ENCODE measurements at regions of chr22 and their contacts with region 1.

Region 1: DNA sequence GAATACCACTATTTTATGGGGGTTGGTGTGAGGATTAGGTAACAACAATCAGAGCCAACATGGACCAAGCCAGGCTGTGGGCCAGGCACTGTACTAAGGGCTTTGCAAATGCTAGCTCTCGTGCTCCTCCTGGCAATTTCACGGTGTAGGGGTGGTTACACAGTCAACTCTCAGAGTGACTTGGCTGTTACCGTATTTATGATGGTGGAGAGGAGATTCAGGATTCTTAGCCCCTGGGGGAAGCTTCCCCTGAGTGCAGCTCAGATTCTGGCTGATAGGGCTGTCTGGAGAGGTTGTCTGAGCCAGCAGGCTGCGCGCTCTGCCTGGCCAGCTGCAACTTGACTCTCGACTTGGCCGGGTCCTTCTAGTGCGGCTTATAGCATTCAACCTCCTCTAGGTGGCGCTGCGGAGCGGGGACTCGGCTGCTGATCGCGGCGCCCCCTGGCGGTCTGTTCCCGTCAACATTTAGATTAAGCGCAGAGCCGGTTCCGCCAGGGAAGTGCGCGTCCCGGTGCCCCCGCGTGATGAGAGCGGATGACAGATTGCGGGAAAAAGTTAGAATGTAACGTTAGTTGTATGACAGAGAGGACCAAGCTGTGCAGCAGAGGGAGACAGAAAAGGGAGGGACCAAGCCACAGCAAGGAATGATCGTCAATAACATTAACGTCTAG is 4.5 kb upstream of the NCF4 start:
- DNase-seq: peak; percentile 92
- ATAC-seq: peak; percentile 44
- H3K4me3 ChIP-seq: no peak overlapping the region
- H3K4me3 Mint-ChIP-seq: peak overlapping the region; percentile 66
- H3K27ac ChIP-seq: no peak overlapping the region
- H3K27ac Mint-ChIP-seq: peak overlapping the region; percentile 78
- H3K4me1 ChIP-seq: peaks cover 28 to 41% of the 10 kb centered on the region in 2 donors
- H3K4me1 Mint-ChIP-seq: peaks cover 39% of the 10 kb centered on the region
- H3K27me3 ChIP-seq: no peaks in the 10 kb centered on the region
- H3K27me3 Mint-ChIP-seq: no peaks in the 10 kb centered on the region
- CTCF ChIP-seq: peak; percentile 100

Region 2: DNA sequence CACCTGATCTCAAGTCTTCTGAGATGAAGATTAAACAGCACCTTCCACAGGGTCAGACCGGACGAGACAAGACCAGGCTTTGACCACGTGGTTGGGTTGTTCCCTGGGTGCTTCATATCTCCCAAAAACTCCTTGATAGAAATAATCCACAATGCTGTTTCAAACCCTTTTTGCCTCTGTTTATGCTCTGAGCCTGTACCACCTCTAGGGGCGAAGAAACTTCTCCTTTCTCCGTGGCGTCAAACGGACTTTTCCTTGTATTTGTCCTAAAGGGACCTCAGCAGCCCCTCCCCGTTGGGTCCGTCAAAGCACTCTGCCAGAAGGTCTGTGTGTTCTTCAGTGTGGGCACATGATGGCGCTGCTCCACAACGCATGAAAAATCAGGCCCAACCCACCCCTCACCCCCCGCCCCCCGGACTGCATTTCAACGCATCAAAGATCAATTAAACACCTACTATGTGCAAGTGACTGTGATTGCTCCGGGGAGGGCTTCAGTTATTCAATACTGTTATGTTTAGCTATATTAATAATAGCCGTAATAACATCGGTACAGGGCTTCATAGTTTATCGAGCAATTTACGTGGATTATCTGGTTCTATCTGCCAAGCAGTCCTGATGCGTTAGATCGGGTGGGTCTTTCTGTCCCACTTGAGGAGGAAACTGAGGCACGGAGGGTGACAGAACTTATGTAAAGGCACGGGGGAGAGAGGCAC is 310.0 kb before region 1 on chr22:
- CTCF ChIA-PET with region 1: interaction called, 12 read pairs
- POLR2A ChIA-PET with region 1: no interaction called
- intact Hi-C with region 1: loop called (anchors 1 kb)
- DNase-seq: peak; percentile 67
- ATAC-seq: peak; percentile 79
- H3K4me3 ChIP-seq: no peak overlapping the region
- H3K4me3 Mint-ChIP-seq: no peak overlapping the region
- H3K27ac ChIP-seq: no peak overlapping the region
- H3K27ac Mint-ChIP-seq: no peak overlapping the region
- H3K4me1 ChIP-seq: peaks cover 15 to 32% of the 10 kb centered on the region in 2 donors
- H3K4me1 Mint-ChIP-seq: peaks cover 19% of the 10 kb centered on the region
- H3K27me3 ChIP-seq: no peaks in the 10 kb centered on the region
- H3K27me3 Mint-ChIP-seq: no peaks in the 10 kb centered on the region
- CTCF ChIP-seq: peak; percentile 67

Region 3: GRCh38 chr22:36569999-36570398 is 286.3 kb before region 1 on chr22:
- CTCF ChIA-PET with region 1: no interaction called
- POLR2A ChIA-PET with region 1: no interaction called
- intact Hi-C with region 1: no loop called
- DNase-seq: no peak
- ATAC-seq: no peak
- H3K4me3 ChIP-seq: no peak overlapping the region
- H3K4me3 Mint-ChIP-seq: no peak overlapping the region
- H3K27ac ChIP-seq: no peak overlapping the region
- H3K27ac Mint-ChIP-seq: no peak overlapping the region
- H3K4me1 ChIP-seq: no peaks in the 10 kb centered on the region
- H3K4me1 Mint-ChIP-seq: no peaks in the 10 kb centered on the region
- H3K27me3 ChIP-seq: no peaks in the 10 kb centered on the region
- H3K27me3 Mint-ChIP-seq: peaks cover 18% of the 10 kb centered on the region
- CTCF ChIP-seq: no peak

Region 4: DNA sequence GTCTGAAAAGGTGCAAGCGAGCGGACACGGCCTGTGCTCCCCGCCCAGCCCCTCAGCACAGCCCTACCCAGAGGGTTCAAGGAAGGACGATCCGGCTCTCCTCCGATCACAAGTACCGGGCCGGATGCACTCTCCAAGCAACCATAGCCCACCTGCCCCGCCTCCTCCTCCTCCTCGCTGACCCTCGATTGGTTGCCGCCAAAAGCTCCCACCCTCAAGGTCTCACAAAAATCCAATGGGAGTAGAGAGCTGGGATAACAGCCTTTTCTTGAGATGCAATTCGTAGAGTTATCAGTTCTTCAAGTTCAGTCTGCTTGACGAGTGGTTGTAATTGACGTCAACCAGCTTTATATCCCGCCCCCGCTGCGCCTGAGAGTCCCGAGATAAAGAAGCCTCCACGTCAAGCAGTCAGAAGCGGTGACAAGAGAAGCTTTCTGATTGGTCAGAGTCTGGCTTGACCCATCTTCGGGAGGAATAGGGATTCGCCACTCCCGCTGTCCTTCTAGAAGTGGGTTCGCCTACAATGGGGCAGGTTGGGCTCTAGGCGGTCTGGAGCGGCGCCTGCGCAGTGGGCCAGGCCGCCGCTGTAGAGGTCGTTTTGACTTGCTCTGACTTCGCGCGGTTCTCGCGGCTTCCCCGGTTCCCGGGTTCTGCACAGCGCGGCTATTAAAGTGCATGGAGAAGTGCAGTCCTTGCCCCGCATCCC is 80.1 kb before region 1 on chr22 and contains the start of gene IFT27:
- CTCF ChIA-PET with region 1: interaction called, 115 read pairs
- POLR2A ChIA-PET with region 1: interaction called, 13 read pairs
- intact Hi-C with region 1: loop called (anchors 2 kb)
- DNase-seq: peak; percentile 99
- ATAC-seq: peak; percentile 87
- H3K4me3 ChIP-seq: peak within 1 kb of the TSS; percentile 60 to 82 (median 73)
- H3K4me3 Mint-ChIP-seq: peak within 1 kb of the TSS; percentile 96
- H3K27ac ChIP-seq: peak within 1 kb of the TSS; percentile 80 to 91
- H3K27ac Mint-ChIP-seq: peak within 1 kb of the TSS; percentile 95
- H3K4me1 ChIP-seq: peaks cover 13 to 17% of the 10 kb centered on the region in 2 donors
- H3K4me1 Mint-ChIP-seq: peaks cover 16% of the 10 kb centered on the region
- H3K27me3 ChIP-seq: no peaks in the 10 kb centered on the region
- H3K27me3 Mint-ChIP-seq: no peaks in the 10 kb centered on the region
- CTCF ChIP-seq: no peak
- total RNA-seq, gene IFT27: 40.3 and 42.8 TPM in 2 replicates

Region 5: DNA sequence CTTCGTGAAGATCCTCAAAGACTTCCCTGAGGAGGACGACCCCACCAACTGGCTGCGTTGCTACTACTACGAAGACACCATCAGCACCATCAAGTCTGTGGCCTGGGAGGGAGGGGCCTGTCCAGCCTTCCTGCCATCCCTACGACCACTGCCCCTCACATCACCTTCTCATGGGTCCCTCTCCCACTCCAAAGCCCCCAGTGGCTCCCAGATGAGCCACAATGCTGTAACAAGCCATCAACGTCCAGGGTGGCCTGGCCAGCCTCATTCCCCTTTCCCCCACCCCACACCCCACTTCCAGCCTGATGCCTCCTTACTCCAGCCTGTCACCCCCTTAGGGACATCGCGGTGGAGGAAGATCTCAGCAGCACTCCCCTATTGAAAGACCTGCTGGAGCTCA is 19.4 kb after region 1 on chr22:
- CTCF ChIA-PET with region 1: no interaction called
- POLR2A ChIA-PET with region 1: no interaction called
- intact Hi-C with region 1: no loop called
- DNase-seq: no peak
- ATAC-seq: no peak
- H3K4me3 ChIP-seq: no peak overlapping the region
- H3K4me3 Mint-ChIP-seq: no peak overlapping the region
- H3K27ac ChIP-seq: no peak overlapping the region
- H3K27ac Mint-ChIP-seq: no peak overlapping the region
- H3K4me1 ChIP-seq: peaks cover 0 to 6% of the 10 kb centered on the region in 2 donors
- H3K4me1 Mint-ChIP-seq: peaks cover 6% of the 10 kb centered on the region
- H3K27me3 ChIP-seq: no peaks in the 10 kb centered on the region
- H3K27me3 Mint-ChIP-seq: no peaks in the 10 kb centered on the region
- CTCF ChIP-seq: no peak

Region 6: GRCh38 chr22:36913427-36914389 is 57.5 kb after region 1 on chr22 and contains the start of gene CSF2RB:
- CTCF ChIA-PET with region 1: interaction called, 30 read pairs
- POLR2A ChIA-PET with region 1: interaction called, 8 read pairs
- intact Hi-C with region 1: loop called (anchors 2 kb)
- DNase-seq: peak; percentile 77
- ATAC-seq: peak; percentile 87
- H3K4me3 ChIP-seq: peak within 1 kb of the TSS; percentile 61 to 77 (median 76)
- H3K4me3 Mint-ChIP-seq: peak within 1 kb of the TSS; percentile 93
- H3K27ac ChIP-seq: peak within 1 kb of the TSS; percentile 87 to 91
- H3K27ac Mint-ChIP-seq: peak within 1 kb of the TSS; percentile 90
- H3K4me1 ChIP-seq: peaks cover 14 to 19% of the 10 kb centered on the region in 2 donors
- H3K4me1 Mint-ChIP-seq: peaks cover 40% of the 10 kb centered on the region
- H3K27me3 ChIP-seq: no peaks in the 10 kb centered on the region
- H3K27me3 Mint-ChIP-seq: peaks cover 3% of the 10 kb centered on the region
- CTCF ChIP-seq: no peak
- total RNA-seq, gene CSF2RB: 39.7 and 41.2 TPM in 2 replicates

Region 7: DNA sequence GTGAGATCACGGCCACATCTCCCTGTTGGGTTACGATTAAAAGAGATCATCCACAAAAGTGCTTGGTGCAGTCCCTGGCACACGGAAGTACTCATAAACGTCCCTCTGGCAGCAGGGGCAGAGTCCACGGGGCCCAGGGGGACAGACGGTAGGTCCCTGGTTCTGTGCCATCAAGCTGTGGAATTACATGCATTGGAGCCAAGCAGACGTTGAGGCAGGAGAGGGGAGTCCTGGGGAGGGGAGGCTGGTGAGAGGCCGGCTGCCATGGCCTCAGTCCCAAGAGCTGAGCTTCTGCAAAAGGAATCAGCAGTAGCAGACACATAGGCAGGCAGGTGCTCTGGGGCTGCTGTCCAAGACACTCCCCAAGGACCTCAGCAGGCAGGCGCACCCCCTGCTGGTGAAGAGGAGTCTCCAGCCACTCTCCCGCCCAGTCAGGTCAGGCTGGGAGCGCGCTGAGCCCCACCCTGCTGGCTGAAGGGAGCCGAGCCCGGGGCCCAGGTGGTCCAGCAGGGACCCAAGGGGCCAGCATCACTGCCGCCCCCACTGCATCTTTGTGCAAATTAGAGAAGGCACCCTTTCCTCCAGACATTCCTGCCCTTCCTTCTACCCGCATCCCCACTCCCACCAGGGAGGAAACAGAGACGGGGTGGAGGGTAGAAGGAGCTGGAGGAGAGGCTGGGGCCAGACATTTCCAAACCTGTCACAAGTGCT is 187.7 kb after region 1 on chr22:
- CTCF ChIA-PET with region 1: interaction called, 4 read pairs
- POLR2A ChIA-PET with region 1: no interaction called
- intact Hi-C with region 1: loop called (anchors 10 kb)
- DNase-seq: peak; percentile 70
- ATAC-seq: peak; percentile 95
- H3K4me3 ChIP-seq: no peak overlapping the region
- H3K4me3 Mint-ChIP-seq: no peak overlapping the region
- H3K27ac ChIP-seq: no peak overlapping the region
- H3K27ac Mint-ChIP-seq: peak overlapping the region; percentile 67
- H3K4me1 ChIP-seq: peaks cover 9 to 14% of the 10 kb centered on the region in 2 donors
- H3K4me1 Mint-ChIP-seq: peaks cover 15% of the 10 kb centered on the region
- H3K27me3 ChIP-seq: no peaks in the 10 kb centered on the region
- H3K27me3 Mint-ChIP-seq: peaks cover 16% of the 10 kb centered on the region
- CTCF ChIP-seq: peak; percentile 67

Measured in B cell (primary cell).